ENCODE measurements at regions of chr13 and their contacts with region 1.

Region 1: DNA sequence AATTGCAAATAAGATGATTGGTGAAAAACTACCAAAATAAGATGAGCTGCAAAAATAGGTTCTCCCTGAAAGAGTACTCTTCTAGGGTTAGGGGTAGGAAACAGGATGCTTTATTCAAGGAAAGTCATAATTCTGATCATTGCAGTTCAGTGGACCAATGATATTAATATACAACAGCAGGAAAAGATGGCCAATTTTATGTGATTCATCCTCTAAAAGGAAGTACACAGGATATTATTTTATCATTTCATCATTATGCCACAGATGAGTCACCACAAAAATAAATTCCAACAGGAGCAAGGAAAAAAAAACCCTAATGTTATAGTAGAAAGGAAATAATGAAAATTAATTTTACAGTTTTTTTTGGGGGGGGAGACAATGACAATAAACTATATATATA is 205.0 kb downstream of the NALCN start:
- DNase-seq: peak in 1 of 2 experiments; percentile 86
- H3K4me3 ChIP-seq: no peak overlapping the region
- H3K27ac ChIP-seq: peak overlapping the region; percentile 85
- H3K4me1 ChIP-seq: peaks cover 18% of the 10 kb centered on the region
- H3K27me3 ChIP-seq: no peaks in the 10 kb centered on the region
- CTCF ChIP-seq: no peak

Region 2: DNA sequence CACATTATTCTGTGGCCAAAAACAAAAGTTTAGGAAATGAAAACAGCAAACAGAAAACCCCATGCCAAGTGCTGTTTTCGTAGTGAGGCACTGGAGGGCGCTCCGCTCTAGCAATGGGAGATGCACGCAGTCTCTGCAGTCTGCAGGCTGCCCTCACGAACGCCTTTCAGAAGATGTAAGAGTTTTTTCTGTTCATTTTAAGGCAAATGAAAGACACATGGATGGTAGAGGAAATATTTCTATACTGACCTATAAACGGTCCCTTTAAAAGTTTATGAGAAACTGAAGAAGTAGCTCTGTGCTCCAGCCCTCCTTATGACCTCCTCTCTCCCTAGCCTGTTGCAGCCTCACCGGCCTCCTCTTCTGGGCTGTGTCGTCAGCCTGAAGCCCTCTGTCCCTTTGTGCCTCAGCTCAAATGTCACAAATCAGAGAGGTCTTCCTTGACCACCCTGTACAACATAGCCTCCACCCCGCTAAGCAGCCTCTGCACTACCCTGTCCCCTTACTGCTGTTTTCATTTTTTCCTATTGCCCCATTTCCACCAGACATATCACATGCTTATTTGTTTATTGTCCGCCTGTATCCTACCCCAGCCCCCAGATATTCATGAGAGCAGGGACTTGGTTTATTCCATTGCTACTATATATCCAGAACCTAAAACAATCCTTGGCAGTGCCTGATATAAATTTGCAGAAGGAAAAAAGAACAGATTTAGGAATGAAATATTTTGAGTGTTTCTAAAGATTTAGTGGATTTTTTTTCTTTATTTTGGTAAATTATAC is 1593.6 kb before region 1 on chr13:
- CTCF ChIA-PET with region 1: interaction called, 11 read pairs
- POLR2A ChIA-PET with region 1: no interaction called
- intact Hi-C with region 1: no loop called
- DNase-seq: no peak
- H3K4me3 ChIP-seq: no peak overlapping the region
- H3K27ac ChIP-seq: no peak overlapping the region
- H3K4me1 ChIP-seq: no peaks in the 10 kb centered on the region
- H3K27me3 ChIP-seq: no peaks in the 10 kb centered on the region
- CTCF ChIP-seq: peak; percentile 66

Region 3: DNA sequence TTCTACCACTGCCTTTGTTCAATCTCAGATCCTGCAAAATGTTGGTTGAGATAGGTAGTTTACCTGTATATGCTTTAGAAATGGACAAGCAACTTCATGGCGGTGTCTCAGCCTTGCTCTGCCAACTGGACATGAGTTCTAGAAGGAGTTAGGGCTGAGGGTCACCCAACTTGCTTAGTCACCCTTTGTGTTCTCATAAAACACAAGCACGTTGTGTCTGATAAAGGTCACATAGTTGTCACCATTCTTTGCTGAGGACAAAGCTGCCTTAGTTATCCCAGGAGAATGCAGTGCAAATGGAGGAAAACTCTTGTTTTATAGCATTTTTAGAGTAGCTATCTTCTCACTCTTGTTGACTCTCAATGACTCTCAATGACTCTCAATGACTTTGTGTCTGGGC is 318.3 kb before region 1 on chr13:
- CTCF ChIA-PET with region 1: no interaction called
- POLR2A ChIA-PET with region 1: no interaction called
- intact Hi-C with region 1: no loop called
- DNase-seq: no peak
- H3K4me3 ChIP-seq: no peak overlapping the region
- H3K27ac ChIP-seq: no peak overlapping the region
- H3K4me1 ChIP-seq: no peaks in the 10 kb centered on the region
- H3K27me3 ChIP-seq: no peaks in the 10 kb centered on the region
- CTCF ChIP-seq: no peak

Region 4: GRCh38 chr13:100962585-100962984 is 248.7 kb before region 1 on chr13:
- CTCF ChIA-PET with region 1: no interaction called
- POLR2A ChIA-PET with region 1: no interaction called
- intact Hi-C with region 1: no loop called
- DNase-seq: no peak
- H3K4me3 ChIP-seq: no peak overlapping the region
- H3K27ac ChIP-seq: no peak overlapping the region
- H3K4me1 ChIP-seq: no peaks in the 10 kb centered on the region
- H3K27me3 ChIP-seq: peaks cover 60% of the 10 kb centered on the region
- CTCF ChIP-seq: no peak

Region 5: DNA sequence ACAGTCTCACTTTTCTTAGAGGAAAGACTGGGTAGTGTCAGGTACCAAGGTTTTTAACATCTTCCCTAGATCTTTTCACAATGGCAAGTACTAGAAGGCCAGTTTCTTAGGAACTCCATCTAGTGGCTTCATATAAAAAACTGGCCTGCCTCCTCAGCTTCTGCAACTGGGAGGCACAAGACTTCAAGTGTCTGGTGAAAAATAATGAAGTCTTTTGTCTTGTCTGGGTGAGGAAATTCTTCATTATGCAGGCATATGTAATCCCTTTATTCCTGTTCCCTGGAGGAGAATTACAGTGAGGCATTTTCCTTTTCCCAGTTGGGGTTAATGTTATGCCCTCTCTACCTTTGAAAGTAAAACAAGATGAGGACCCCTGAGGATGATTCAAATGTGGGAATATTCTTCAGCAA is 95.5 kb before region 1 on chr13:
- CTCF ChIA-PET with region 1: no interaction called
- POLR2A ChIA-PET with region 1: no interaction called
- intact Hi-C with region 1: no loop called
- DNase-seq: no peak
- H3K4me3 ChIP-seq: no peak overlapping the region
- H3K27ac ChIP-seq: no peak overlapping the region
- H3K4me1 ChIP-seq: no peaks in the 10 kb centered on the region
- H3K27me3 ChIP-seq: no peaks in the 10 kb centered on the region
- CTCF ChIP-seq: no peak

Region 6: GRCh38 chr13:101230271-101230890 is 19.1 kb after region 1 on chr13:
- CTCF ChIA-PET with region 1: no interaction called
- POLR2A ChIA-PET with region 1: no interaction called
- intact Hi-C with region 1: no loop called
- DNase-seq: no peak
- H3K4me3 ChIP-seq: no peak overlapping the region
- H3K27ac ChIP-seq: no peak overlapping the region
- H3K4me1 ChIP-seq: no peaks in the 10 kb centered on the region
- H3K27me3 ChIP-seq: no peaks in the 10 kb centered on the region
- CTCF ChIP-seq: no peak

Measured in PC-9 (cell line).